ENCODE measurements at regions of chr7 and their contacts with region 1.

Region 1: GRCh38 chr7:100428199-100428966 is at the start of gene ZCWPW1:
- DNase-seq: peak; percentile 96
- H3K4me3 Mint-ChIP-seq: peak within 1 kb of the TSS; percentile 92
- H3K27ac Mint-ChIP-seq: peak within 1 kb of the TSS; percentile 100
- H3K4me1 Mint-ChIP-seq: peaks cover 46% of the 10 kb centered on the region
- H3K27me3 Mint-ChIP-seq: peaks cover 3% of the 10 kb centered on the region
- total RNA-seq, gene ZCWPW1: 2.7 to 3.0 TPM

Region 2: GRCh38 chr7:100119062-100119700 is 309.2 kb before region 1 on chr7 and contains the starts of genes CNPY4 and TAF6:
- CTCF ChIA-PET with region 1: no interaction called
- POLR2A ChIA-PET with region 1: interaction called, 10 read pairs
- DNase-seq: peak; percentile 94
- H3K4me3 Mint-ChIP-seq: peak within 1 kb of the TSS; percentile 86
- H3K27ac Mint-ChIP-seq: peak within 1 kb of the TSS; percentile 82
- H3K4me1 Mint-ChIP-seq: peaks cover 30% of the 10 kb centered on the region
- H3K27me3 Mint-ChIP-seq: no peaks in the 10 kb centered on the region
- total RNA-seq, gene CNPY4: 31.3 to 32.5 TPM
- total RNA-seq, gene TAF6: 54.6 to 56.5 TPM

Region 3: DNA sequence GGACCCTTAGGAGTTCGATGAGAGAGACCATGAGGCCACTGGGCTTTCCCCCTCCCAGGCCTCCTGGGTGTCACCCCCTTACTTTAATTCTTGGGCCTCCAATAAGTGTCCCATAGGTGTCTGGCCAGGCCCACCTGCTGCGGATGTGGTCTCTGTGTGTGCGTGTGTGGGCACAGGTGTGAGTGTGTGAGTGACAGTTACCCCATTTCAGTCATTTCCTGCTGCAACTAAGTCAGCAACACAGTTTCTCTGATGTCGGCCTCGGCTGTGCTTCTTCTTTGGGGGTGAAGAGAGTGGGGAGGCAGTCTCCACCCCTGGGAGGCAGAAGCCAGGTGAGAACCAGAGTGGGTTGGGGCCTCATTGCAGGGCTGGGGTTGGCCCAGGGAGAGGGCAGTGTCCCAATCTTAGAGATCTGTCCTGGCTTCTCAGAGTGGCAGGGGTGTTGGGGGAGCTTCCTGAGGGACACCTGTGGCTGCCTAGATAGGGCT is 207.1 kb before region 1 on chr7:
- CTCF ChIA-PET with region 1: interaction called, 4 read pairs
- POLR2A ChIA-PET with region 1: interaction called, 11 read pairs
- DNase-seq: peak; percentile 86
- H3K4me3 Mint-ChIP-seq: peak overlapping the region; percentile 87
- H3K27ac Mint-ChIP-seq: peak overlapping the region; percentile 99
- H3K4me1 Mint-ChIP-seq: peaks cover 65% of the 10 kb centered on the region
- H3K27me3 Mint-ChIP-seq: no peaks in the 10 kb centered on the region

Region 4: DNA sequence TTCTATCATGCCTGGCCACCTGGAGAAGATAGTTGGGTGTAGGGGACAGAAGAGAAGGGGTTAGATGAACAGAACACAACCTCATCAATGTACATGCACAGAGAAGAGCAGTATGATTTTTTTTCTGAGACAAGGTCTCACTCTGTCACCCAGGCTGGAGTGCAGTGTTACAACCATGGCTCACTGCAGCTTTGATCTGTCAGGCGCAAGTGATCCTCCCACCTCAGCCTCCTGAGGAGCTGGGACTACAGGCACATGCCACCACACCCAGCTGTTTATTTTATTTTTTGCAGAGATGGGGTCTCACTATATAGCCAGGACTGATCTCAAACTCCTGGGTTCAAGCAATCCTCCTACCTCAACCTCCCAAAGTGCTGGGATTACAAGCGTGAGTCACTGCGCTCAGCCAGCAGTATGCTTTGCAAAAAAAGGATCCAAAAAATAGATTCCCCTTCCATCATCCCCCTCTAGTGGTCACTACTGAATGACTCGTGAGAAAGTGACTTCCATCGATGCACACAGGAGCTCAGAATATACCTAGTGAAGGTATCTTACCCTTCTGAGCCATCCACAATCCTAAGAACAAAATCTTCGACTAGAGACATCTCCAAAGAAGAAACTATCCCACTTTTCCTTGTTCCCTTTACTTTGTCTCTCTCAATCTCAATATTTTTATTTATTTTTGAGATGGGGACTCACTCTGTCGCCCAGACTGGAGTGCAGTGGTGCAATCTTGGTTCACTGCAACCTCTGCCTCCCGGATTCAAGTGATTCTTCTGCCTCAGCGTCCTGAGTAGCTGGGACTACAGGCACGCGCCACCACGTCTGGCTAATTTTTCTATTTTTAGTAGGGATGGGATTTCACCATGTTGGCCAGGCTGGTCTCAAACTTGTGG is 20.9 kb before region 1 on chr7:
- CTCF ChIA-PET with region 1: interaction called, 6 read pairs
- POLR2A ChIA-PET with region 1: interaction called, 12 read pairs
- DNase-seq: peak; percentile 28
- H3K4me3 Mint-ChIP-seq: no peak overlapping the region
- H3K27ac Mint-ChIP-seq: no peak overlapping the region
- H3K4me1 Mint-ChIP-seq: peaks cover 2% of the 10 kb centered on the region
- H3K27me3 Mint-ChIP-seq: peaks cover 21% of the 10 kb centered on the region

Region 5: DNA sequence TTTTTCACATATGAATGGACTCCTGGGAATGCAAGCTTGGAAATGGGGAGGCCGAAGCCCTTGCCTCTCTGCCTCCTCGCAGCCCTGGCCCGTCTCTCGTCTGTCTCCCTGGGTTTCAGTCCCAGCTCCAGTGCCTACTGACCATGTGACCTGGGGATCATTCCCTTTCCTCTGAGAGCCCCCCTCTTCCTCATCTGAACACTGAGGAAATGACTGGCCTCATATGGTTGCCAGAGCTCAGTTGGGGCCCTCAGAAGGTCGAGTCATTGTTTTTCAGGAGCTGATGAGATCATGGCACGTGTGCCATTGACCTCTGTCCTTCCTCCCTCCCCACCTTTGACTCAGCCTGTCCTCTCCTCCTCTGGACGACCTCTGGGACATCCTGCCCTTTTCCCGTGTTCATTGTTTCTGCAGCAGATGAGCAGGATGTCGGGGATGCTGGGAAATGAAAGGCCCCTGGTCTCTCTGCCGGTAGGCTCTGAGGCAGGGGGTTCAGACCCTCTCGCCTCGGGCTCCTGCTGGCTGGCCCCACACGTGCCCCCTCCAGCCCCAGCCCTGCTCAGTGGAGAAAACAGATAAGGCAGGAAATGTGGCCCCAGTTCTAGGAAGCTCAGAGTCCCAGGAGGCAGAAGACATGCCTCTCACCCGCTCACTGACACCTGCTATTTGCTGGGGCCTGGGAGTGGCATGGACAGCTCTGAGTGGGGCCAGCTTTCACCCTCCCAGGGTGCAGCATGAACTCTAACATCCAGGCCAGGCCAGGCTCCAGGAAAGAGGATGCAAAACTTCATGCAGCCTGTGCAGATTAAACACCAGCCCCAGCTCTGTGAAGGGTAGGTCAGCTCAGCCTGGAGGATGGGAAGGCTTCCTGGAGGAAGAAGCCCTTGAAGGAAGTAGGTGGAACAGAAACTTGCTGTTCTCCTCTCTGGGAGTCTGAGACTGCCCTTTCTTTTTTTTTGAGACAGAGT is 16.2 kb after region 1 on chr7:
- CTCF ChIA-PET with region 1: no interaction called
- POLR2A ChIA-PET with region 1: interaction called, 43 read pairs
- DNase-seq: no peak
- H3K4me3 Mint-ChIP-seq: no peak overlapping the region
- H3K27ac Mint-ChIP-seq: peak overlapping the region; percentile 73
- H3K4me1 Mint-ChIP-seq: peaks cover 29% of the 10 kb centered on the region
- H3K27me3 Mint-ChIP-seq: no peaks in the 10 kb centered on the region

Region 6: GRCh38 chr7:100538654-100539435 is 110.5 kb after region 1 on chr7 and contains the start of gene AGFG2:
- CTCF ChIA-PET with region 1: no interaction called
- POLR2A ChIA-PET with region 1: interaction called, 17 read pairs
- DNase-seq: peak; percentile 100
- H3K4me3 Mint-ChIP-seq: peak within 1 kb of the TSS; percentile 97
- H3K27ac Mint-ChIP-seq: peak within 1 kb of the TSS; percentile 87
- H3K4me1 Mint-ChIP-seq: peaks cover 49% of the 10 kb centered on the region
- H3K27me3 Mint-ChIP-seq: no peaks in the 10 kb centered on the region
- total RNA-seq, gene AGFG2: 53.9 to 59.8 TPM

Region 7: GRCh38 chr7:100545360-100546128 is 117.2 kb after region 1 on chr7:
- CTCF ChIA-PET with region 1: no interaction called
- POLR2A ChIA-PET with region 1: interaction called, 17 read pairs
- DNase-seq: peak; percentile 59
- H3K4me3 Mint-ChIP-seq: peak overlapping the region; percentile 97
- H3K27ac Mint-ChIP-seq: peak overlapping the region; percentile 96
- H3K4me1 Mint-ChIP-seq: peaks cover 96% of the 10 kb centered on the region
- H3K27me3 Mint-ChIP-seq: no peaks in the 10 kb centered on the region

Region 8: DNA sequence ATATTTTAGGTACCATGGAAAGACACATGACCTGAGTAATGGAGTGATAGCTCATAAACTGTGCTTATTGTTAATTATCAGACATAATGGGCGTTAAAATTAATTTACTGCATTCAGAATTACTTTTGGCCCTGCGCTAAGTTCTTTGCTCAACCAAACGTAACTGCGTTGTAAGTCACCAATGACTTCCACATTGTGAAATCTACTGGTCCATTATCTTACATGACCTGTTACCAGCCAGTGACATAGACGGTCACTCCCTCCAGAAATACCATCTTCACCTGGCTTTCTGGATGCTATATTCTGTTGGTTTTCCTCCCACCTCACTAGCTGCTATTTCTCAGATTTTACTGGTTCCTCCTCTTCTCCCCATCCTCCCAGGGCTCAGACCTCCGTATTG is 270.6 kb after region 1 on chr7:
- CTCF ChIA-PET with region 1: no interaction called
- POLR2A ChIA-PET with region 1: no interaction called
- DNase-seq: no peak
- H3K4me3 Mint-ChIP-seq: no peak overlapping the region
- H3K27ac Mint-ChIP-seq: no peak overlapping the region
- H3K4me1 Mint-ChIP-seq: peaks cover 7% of the 10 kb centered on the region
- H3K27me3 Mint-ChIP-seq: peaks cover 23% of the 10 kb centered on the region